Activated T-helper 2 cell treated with anti-CD3 and anti-CD28 coated beads, Interferon-gamma antibody, Interleukin-2, Interleukin-4, amounts not matched to agents 10 μg/mL and 5 μg/mL and 100 μg/mL, durations not matched to agents 14 hours and 24 hours and 36 hours (primary cell): ENCODE measurements at regions of chr2 and their contacts with region 1.

Region 1: GRCh38 chr2:20507166-20507692 is 60.4 kb downstream of the RHOB start:
- DNase-seq: no peak
- H3K4me3 Mint-ChIP-seq: no peak overlapping the region
- H3K27ac Mint-ChIP-seq: peak overlapping the region; percentile 76
- H3K4me1 Mint-ChIP-seq: peaks cover 8% of the 10 kb centered on the region
- H3K27me3 Mint-ChIP-seq: no peaks in the 10 kb centered on the region

Region 2: GRCh38 chr2:20172273-20173055 is 334.8 kb before region 1 on chr2:
- intact Hi-C with region 1: no loop called
- DNase-seq: no peak
- H3K4me3 Mint-ChIP-seq: no peak overlapping the region
- H3K27ac Mint-ChIP-seq: no peak overlapping the region
- H3K4me1 Mint-ChIP-seq: no peaks in the 10 kb centered on the region
- H3K27me3 Mint-ChIP-seq: no peaks in the 10 kb centered on the region

Region 3: DNA sequence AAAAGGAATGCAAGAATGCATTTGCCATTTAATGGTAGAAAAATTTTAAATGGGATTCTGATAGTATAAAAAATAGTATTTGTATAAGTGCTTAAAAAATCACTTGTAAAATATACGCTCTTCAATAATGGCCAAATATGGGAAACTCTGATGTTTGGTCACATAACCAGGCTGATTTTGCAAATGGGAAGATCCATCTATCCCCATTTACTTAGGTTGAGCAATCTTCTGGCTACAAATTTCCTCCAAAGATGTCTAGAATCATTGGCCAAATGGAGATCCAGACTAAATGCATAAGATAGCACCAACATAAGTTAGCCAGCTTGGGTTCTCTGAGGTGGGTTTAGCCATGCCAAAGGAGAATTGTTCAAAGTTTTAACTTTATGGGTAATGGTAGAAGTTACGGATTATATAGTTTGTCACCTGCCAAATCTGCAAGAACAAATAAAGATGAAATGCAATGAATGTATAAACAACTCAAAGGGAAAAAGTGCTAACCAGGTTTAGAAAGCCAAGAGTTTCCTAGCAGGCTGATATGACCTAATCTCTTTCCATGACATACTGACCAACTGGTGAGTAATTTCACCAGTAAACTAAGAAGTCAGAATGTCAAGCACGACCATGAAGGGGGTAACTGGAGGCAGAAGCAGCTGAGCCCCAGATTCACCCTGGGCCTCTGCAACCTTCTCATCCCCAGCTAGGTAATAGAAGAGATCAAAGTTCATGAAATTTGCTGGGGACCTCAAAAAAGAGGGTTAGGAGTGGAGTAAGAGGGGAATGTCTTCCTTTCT is 50.4 kb before region 1 on chr2:
- intact Hi-C with region 1: loop called (anchors 1 kb)
- DNase-seq: no peak
- H3K4me3 Mint-ChIP-seq: no peak overlapping the region
- H3K27ac Mint-ChIP-seq: peak overlapping the region; percentile 80
- H3K4me1 Mint-ChIP-seq: peaks cover 13% of the 10 kb centered on the region
- H3K27me3 Mint-ChIP-seq: peaks cover 28% of the 10 kb centered on the region

Region 4: GRCh38 chr2:20852139-20852538 is 344.9 kb after region 1 on chr2:
- intact Hi-C with region 1: no loop called
- DNase-seq: no peak
- H3K4me3 Mint-ChIP-seq: no peak overlapping the region
- H3K27ac Mint-ChIP-seq: no peak overlapping the region
- H3K4me1 Mint-ChIP-seq: no peaks in the 10 kb centered on the region
- H3K27me3 Mint-ChIP-seq: peaks cover 4% of the 10 kb centered on the region